ENCODE measurements at regions of chr15 and their contacts with region 1.

Region 1: DNA sequence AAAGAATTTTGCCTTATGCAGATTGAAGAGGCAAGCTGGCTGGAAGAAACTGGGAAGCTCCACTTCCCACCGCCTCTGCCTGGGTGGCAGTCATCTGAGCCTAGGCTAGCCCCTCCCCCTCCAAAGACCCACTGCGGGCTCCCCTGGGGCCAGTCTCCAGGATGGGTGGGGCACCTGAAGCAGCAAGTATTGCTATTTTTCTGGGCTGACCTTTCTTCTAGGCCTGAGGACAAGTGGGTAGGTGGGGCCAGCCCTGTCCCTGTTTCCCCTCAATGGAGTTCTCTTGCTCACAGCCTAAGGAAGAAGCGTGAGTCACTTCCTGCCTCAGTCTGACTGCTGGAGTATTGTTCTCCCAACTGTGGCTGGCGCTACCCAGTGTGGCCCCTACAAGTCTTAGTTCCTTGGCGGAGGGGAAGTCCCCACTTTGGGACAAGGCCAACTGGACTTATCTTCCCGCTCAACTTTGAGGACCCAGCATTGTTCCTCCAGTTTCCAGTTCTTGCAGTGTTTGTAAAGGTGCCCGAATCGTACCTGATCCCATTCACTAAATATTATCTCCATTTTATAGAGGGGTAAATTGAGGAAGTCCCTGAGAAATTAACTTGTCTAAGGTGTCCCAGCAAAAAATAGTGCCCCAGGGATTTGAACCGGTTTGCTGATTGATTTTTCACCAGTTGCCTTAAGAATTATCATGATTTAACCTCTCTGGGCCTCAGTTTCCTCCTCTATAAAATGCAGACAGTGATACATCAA is 1.4 kb downstream of the FURIN start:
- DNase-seq: peak; percentile 88 to 89
- ATAC-seq: peak; percentile 78
- H3K4me3 ChIP-seq: no peak overlapping the region
- H3K27ac ChIP-seq: peak overlapping the region in 1 of 2 donors; percentile 57
- H3K4me1 ChIP-seq: peaks cover 1 to 2% of the 10 kb centered on the region in 2 donors
- H3K27me3 ChIP-seq: no peaks in the 10 kb centered on the region

Region 2: DNA sequence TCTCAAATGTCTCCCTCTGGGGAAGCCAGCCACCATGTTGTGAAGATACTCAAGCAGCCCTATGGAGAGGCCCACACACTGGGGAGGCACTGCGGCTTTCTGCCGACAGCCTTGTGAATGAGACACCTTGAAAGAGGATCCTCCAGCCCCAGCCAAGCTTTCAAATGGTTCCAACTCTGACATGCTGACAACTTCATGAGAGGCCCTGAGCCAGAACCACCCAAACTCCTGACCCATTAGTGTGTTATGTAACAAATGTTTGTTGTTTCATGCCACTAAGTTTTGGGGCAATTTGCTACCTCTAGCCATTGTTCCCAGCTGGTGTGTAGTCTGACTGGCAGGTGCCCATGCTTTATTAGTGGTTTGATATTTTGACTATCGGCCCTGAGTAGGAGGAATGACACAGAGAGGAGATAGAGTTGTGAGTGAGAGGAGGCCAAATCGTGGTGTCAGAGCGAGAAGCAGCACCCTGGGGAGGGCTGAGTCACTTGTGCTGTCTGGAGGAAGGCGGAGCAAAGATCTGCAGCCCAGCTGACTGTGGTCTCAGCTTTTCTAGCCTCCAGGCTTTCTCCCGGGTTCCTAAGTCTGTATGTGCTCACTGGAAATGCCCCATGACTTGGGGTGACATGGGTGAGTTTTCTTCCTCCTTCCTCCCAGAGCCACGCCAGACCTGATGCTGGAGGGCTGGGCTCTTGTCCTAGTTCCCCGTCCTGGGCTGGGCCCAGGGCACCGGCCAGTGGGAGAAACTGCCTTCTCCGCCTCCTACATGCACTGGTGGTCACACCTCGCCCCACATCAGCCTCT is 209.4 kb before region 1 on chr15:
- intact Hi-C with region 1: loop called in 1 of 2 experiments (anchors 5 kb)
- DNase-seq: peak; percentile 89 to 91
- ATAC-seq: peak; percentile 85
- H3K4me3 ChIP-seq: no peak overlapping the region
- H3K27ac ChIP-seq: no peak overlapping the region
- H3K4me1 ChIP-seq: no peaks in the 10 kb centered on the region
- H3K27me3 ChIP-seq: no peaks in the 10 kb centered on the region

Region 3: DNA sequence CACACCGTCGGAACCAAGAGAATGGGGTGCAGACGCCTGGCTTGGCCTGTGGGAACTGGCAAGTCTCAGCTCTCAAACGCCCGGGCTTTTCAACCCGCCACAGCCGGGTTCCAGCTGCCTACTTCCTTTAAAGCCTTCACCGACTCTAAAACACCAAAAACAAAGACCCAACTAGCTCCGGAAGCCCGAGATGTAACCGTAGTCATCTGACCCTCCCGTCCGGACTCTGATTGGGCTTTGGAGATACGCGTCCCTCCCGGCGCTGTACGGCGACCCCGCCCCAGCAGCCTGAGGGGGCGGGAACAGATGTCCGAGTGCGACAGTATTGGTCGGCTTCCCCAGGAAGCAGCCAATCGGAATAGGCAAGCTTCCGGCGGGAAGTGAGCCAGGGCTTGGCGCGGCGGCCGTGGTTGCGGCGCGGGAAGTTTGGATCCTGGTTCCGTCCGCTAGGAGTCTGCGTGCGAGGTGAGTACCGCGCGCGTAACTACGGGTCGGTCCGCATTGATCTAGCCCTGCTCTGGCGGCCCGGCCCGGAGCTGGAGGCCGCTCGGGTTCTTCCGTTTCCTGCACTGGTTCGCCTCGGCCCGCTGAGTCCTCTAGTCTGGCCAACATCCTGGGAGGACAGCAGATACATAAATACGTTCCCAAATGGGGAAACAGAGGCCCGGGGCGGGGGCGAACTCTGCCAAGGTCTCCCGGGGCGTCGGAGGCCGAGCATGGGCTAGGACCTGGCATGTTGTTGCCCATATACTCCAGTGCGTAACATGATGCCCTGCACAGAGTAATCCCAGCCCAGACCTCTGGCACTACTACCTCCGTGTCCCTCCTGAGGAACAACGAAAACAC is 152.6 kb before region 1 on chr15 and contains the start of gene BLM:
- intact Hi-C with region 1: loop called in 1 of 2 experiments (anchors 5 kb)
- DNase-seq: peak; percentile 98
- ATAC-seq: peak; percentile 100
- H3K4me3 ChIP-seq: peak within 1 kb of the TSS; percentile 53 to 75
- H3K27ac ChIP-seq: peak within 1 kb of the TSS in 1 of 2 donors; percentile 85
- H3K4me1 ChIP-seq: no peaks in the 10 kb centered on the region
- H3K27me3 ChIP-seq: no peaks in the 10 kb centered on the region
- total RNA-seq, gene BLM: 0.94 to 3.2 TPM